A549 (cell line): ENCODE measurements at regions of chr17 and their contacts with region 1.

Region 1: DNA sequence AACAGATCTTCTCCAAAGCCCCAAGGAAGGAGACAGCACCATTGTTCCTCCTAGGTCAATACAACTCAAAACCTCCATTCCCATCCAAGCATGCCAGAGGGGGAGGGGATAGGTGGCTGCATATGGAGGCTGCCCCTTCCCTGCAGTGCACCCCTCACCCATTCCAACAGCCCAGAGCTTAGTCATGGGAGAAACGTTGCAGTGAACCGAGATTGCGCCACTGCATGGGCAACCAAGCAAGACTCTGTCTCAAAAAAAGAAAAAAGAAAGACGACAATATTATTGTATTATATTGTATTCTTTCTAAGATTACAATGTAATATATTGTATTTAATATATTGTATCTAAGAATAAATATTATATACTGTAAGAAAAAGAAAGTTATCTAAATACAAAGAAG is 36.4 kb upstream of the CD300E start:
- DNase-seq: no peak
- ATAC-seq: no peak
- H3K4me3 ChIP-seq: no peak overlapping the region
- H3K27ac ChIP-seq: no peak overlapping the region
- H3K4me1 ChIP-seq: 0 out of 3 replicates have a peak, but pooled peaks cover 3% of the 10 kb centered on the region
- CTCF ChIP-seq: no peak
- EP300 ChIP-seq: no peak
- POLR2A ChIP-seq: no peak
- RAD21 ChIP-seq: no peak

Region 2: GRCh38 chr17:74601944-74602572 is 57.8 kb before region 1 on chr17:
- CTCF ChIA-PET with region 1: interaction called, 13 read pairs
- POLR2A ChIA-PET with region 1: no interaction called
- DNase-seq: peak; percentile 70 to 79
- ATAC-seq: peak; percentile 65 to 85; a peak in 4 of 6 replicates
- H3K4me3 ChIP-seq: no peak overlapping the region
- H3K27ac ChIP-seq: peak overlapping the region in 1 of 2 experiments; percentile 44; a peak in 2 of 6 replicates
- H3K4me1 ChIP-seq: peaks cover 12% of the 10 kb centered on the region
- CTCF ChIP-seq: peak; percentile 96
- EP300 ChIP-seq: no peak
- POLR2A ChIP-seq: no peak
- RAD21 ChIP-seq: peak; percentile 91 to 93

Region 3: DNA sequence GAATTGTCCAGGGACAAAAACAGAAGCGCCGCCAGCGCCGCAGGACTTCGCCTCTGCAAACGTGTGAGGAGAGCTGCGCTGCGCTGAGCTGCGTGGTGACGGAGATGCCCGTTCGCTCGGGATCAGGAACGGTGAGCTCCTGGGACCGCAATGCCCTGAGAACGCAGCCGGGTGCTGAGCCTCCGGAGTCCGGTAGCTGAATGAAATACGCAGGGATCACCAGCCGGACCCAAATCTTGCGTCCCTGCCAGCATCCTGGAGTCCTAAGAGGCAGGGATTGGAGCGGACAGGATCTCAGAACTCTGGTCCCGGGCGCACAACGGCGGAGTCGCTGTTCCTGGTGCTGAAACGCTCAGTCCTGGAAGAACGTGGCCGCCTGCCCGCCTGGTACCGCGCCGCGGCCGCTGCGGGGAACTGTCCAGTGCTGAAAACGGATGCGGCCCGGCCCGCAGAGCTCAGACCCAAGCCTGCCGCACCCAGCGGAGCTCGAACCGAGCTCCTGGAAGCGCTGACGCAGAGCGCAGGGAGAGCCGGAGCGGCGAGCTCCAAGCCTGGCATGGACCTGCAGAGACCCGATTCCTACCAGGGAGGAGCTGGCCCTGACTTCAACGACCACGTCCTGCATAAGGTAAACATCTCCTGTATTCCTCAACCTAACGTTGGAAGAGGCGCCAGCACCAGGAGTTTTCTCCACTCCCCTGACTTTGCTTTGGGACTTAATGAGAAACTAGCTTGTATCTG is 11.3 kb after region 1 on chr17:
- CTCF ChIA-PET with region 1: interaction called, 26 read pairs
- POLR2A ChIA-PET with region 1: interaction called, 3 read pairs
- DNase-seq: peak; percentile 71 to 80
- ATAC-seq: peak; percentile 88 to 98
- H3K4me3 ChIP-seq: no peak overlapping the region
- H3K27ac ChIP-seq: no peak overlapping the region
- H3K4me1 ChIP-seq: no peaks in the 10 kb centered on the region
- CTCF ChIP-seq: no peak
- EP300 ChIP-seq: no peak
- POLR2A ChIP-seq: no peak
- RAD21 ChIP-seq: no peak

Region 4: DNA sequence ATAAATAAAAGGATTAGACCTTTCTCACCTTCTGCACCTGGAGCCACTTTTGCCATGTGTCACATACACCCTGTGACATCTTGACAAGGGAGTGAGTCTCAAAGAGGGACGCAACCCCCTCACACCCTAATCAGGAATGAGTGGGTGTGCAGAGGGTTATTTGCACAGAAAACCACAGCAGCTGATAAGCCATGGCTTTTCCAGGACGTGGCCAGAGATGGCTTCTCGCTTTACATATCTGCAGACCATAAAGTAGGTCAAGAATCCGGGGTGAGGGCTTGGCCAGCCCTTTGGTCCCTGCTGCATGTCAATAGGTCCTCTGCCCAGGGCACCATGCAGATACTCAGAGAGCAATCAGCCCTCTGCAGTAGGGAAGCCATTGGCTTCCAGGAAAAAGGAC is 55.2 kb after region 1 on chr17:
- CTCF ChIA-PET with region 1: interaction called, 12 read pairs
- POLR2A ChIA-PET with region 1: no interaction called
- DNase-seq: no peak
- ATAC-seq: no peak; a peak in 1 of 6 replicates
- H3K4me3 ChIP-seq: no peak overlapping the region
- H3K27ac ChIP-seq: no peak overlapping the region
- H3K4me1 ChIP-seq: no peaks in the 10 kb centered on the region
- CTCF ChIP-seq: no peak
- EP300 ChIP-seq: no peak
- POLR2A ChIP-seq: no peak
- RAD21 ChIP-seq: no peak

Region 5: GRCh38 chr17:74742153-74742515 is 82.2 kb after region 1 on chr17:
- CTCF ChIA-PET with region 1: interaction called, 145 read pairs
- POLR2A ChIA-PET with region 1: interaction called, 8 read pairs
- DNase-seq: no peak
- ATAC-seq: no peak
- H3K4me3 ChIP-seq: no peak overlapping the region
- H3K27ac ChIP-seq: peak overlapping the region in 1 of 2 experiments; percentile 12; a peak in 1 of 6 replicates
- H3K4me1 ChIP-seq: peaks cover 29% of the 10 kb centered on the region
- CTCF ChIP-seq: no peak
- EP300 ChIP-seq: no peak
- POLR2A ChIP-seq: no peak
- RAD21 ChIP-seq: no peak

Region 6: GRCh38 chr17:74770498-74771318 is 110.8 kb after region 1 on chr17:
- CTCF ChIA-PET with region 1: interaction called, 65 read pairs
- POLR2A ChIA-PET with region 1: interaction called, 4 read pairs
- DNase-seq: peak; percentile 77 to 88
- ATAC-seq: peak; percentile 79 to 89
- H3K4me3 ChIP-seq: no peak overlapping the region
- H3K27ac ChIP-seq: no peak overlapping the region
- H3K4me1 ChIP-seq: peaks cover 33% of the 10 kb centered on the region
- CTCF ChIP-seq: peak; percentile 86
- EP300 ChIP-seq: no peak
- POLR2A ChIP-seq: no peak
- RAD21 ChIP-seq: peak; percentile 87 to 92

Region 7: DNA sequence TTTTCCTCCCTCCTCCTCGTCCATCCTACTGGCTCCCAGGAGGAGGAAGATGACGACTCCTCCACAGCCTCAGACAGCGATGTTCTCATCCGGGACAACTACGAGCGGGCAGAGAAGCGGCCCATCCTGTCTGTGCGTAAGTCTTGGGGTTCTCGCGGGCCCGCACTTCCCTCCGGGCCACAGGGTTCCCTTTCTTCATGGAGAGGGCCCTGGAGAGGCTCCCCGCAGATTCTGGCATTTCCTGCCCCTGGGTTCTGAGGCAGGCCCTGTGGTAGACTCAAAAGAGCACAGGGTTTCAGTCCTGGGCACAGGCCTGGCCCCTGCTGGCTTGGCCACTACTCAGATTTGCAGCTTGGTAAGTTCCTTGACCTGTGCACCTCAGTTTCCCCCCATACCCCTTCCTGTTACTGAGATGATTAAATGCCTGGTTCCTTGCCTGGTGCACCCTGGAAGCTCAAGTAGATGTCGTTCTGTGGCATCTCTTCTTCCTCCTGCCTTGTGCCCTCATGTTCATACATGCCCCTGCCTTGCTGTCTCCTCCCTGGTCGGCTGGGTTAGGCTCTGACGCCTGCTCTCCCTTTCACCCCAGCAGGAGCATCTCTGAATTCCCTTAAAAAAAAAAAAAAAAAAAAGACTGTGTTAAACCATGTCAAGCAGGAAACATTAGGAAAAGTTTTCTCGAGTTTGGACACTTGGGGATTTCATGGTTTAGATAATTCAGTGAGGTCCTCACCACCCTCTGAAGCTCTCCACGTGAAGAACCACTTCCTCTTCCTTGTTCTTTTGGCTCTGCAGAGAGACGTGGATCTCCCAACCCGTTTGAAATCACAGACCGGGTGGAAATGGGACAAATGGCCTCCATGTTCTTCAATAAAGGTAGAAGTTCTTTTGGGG is 130.5 kb after region 1 on chr17:
- CTCF ChIA-PET with region 1: interaction called, 14 read pairs
- POLR2A ChIA-PET with region 1: no interaction called
- DNase-seq: no peak
- ATAC-seq: no peak
- H3K4me3 ChIP-seq: no peak overlapping the region
- H3K27ac ChIP-seq: no peak overlapping the region
- H3K4me1 ChIP-seq: no peaks in the 10 kb centered on the region
- CTCF ChIP-seq: no peak
- EP300 ChIP-seq: no peak
- POLR2A ChIP-seq: no peak
- RAD21 ChIP-seq: no peak